Endothelial cell of umbilical vein (primary cell): ENCODE measurements at regions of chr3 and their contacts with region 1.

Region 1: DNA sequence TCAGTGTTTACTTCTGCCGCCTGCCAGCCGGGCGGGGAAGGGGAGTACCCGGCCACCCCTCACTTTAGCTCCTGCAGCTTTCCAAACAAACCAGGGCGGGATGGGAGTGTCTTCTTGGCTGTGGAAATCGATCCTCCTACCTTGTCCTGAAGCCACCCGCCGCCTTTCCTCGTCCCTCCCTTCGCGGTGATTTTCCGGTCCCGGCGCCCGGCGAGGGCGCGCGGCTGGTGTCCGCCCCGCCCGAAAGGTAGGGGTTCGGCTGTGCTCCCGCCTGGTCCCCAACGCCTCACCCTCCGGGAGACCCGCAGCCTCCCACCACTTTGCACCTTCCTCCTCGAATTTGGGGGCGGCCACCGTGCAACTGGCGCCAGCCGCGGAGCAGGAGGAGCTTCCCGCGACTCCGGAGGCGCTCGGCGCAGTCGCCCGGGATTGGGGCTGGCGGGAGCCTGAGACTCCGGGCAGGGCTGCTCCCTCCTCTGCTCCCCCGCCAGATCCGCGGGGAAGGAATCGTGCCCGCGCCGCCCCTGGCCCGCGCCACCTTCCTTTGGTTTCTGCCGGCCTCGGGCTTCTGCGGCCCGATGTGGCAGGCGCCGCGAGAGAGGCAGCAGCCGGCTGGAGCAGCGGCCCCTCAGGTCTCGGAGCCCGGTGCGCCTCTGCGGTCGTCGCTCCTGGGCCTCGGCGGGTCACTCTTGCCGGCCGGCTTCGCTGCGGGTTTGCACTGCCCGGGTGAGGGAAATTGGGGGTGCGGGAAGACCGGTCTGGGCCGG is 30.7 kb upstream of the ST3GAL6 start:
- DNase-seq: peak; percentile 59
- H3K4me3 ChIP-seq: peak overlapping the region; percentile 45 to 96 (median 86)
- H3K27ac ChIP-seq: peak overlapping the region; percentile 92
- H3K4me1 ChIP-seq: peaks cover 45% of the 10 kb centered on the region
- H3K27me3 ChIP-seq: no peaks in the 10 kb centered on the region
- CTCF ChIP-seq: no peak
- POLR2A ChIP-seq: peak; percentile 55

Region 2: GRCh38 chr3:98695796-98696195 is 36.7 kb before region 1 on chr3:
- CTCF ChIA-PET with region 1: no interaction called
- POLR2A ChIA-PET with region 1: interaction called, 3 read pairs
- dilution Hi-C with region 1: no loop called
- intact Hi-C with region 1: loop called (anchors 5 kb)
- DNase-seq: peak; percentile 84
- H3K4me3 ChIP-seq: no peak overlapping the region
- H3K27ac ChIP-seq: peak overlapping the region; percentile 65
- H3K4me1 ChIP-seq: peaks cover 48% of the 10 kb centered on the region
- H3K27me3 ChIP-seq: peaks cover 0 to 7% of the 10 kb centered on the region in 2 experiments
- CTCF ChIP-seq: no peak
- POLR2A ChIP-seq: no peak

Region 3: DNA sequence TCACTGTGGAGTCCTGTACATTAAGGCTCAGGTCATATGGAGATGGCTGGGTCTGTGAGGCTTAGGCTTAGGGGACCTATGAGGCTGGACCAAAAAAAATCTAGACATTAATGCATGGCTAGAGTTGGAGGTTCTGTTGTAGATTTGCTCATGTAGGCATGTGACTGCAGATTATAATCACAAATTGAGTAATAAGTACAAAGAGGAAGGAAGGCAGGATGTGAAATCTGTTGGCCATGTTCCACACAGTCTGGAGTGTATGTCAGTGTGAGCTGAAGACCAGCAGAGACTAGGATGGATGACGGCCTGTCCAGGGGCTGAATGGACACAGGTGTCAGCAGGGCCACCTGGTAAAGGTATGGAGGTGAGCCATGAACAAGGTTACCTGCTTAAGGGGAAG is 30.6 kb after region 1 on chr3 and contains the start of gene ST3GAL6:
- CTCF ChIA-PET with region 1: interaction called, 4 read pairs
- POLR2A ChIA-PET with region 1: no interaction called
- dilution Hi-C with region 1: no loop called
- intact Hi-C with region 1: loop called (anchors 2 kb)
- DNase-seq: peak; percentile 85
- H3K4me3 ChIP-seq: peak within 1 kb of the TSS in 1 of 3 experiments; percentile 9
- H3K27ac ChIP-seq: peak within 1 kb of the TSS; percentile 66
- H3K4me1 ChIP-seq: peaks cover 66% of the 10 kb centered on the region
- H3K27me3 ChIP-seq: no peaks in the 10 kb centered on the region
- CTCF ChIP-seq: no peak
- POLR2A ChIP-seq: no peak
- total RNA-seq, gene ST3GAL6: 17.7 and 35.9 TPM in 2 replicates

Region 4: DNA sequence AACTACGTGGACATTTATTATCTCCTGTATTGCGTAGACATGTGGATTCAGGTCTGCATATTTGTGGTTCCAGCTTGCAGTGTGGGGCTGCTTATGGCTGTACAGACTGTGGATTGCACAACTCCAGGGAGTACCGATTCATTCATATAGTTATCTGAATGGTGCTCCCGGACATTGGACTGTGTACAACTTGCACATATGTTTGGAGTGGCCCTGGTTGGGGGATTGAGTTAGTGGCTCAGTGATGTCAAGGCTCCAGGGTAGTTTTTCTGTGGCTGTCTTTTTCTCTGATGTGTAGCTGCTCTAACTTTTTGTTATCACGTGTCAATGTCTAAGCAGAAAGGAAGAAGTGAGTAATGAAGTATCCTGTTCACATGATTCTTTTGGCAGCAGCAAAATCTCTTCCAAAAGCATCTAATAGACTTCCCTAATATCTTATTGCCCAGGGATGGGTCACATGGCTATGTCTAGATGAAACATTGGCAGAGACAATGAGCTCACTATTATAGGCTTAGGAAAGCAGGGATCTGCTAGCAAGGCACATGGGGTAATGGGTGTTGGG is 46.5 kb after region 1 on chr3:
- CTCF ChIA-PET with region 1: interaction called, 29 read pairs
- POLR2A ChIA-PET with region 1: interaction called, 3 read pairs
- dilution Hi-C with region 1: no loop called
- intact Hi-C with region 1: loop called (anchors 1 kb)
- DNase-seq: peak; percentile 97
- H3K4me3 ChIP-seq: peak overlapping the region in 1 of 3 experiments; percentile 9
- H3K27ac ChIP-seq: peak overlapping the region; percentile 98
- H3K4me1 ChIP-seq: peaks cover 42% of the 10 kb centered on the region
- H3K27me3 ChIP-seq: no peaks in the 10 kb centered on the region
- CTCF ChIP-seq: no peak
- POLR2A ChIP-seq: no peak

Region 5: GRCh38 chr3:98791341-98792325 is 59.2 kb after region 1 on chr3:
- CTCF ChIA-PET with region 1: interaction called, 11 read pairs
- POLR2A ChIA-PET with region 1: no interaction called
- dilution Hi-C with region 1: no loop called
- intact Hi-C with region 1: no loop called
- DNase-seq: peak; percentile 82
- H3K4me3 ChIP-seq: no peak overlapping the region
- H3K27ac ChIP-seq: peak overlapping the region; percentile 2
- H3K4me1 ChIP-seq: peaks cover 20% of the 10 kb centered on the region
- H3K27me3 ChIP-seq: no peaks in the 10 kb centered on the region
- CTCF ChIP-seq: no peak
- POLR2A ChIP-seq: no peak

Region 6: DNA sequence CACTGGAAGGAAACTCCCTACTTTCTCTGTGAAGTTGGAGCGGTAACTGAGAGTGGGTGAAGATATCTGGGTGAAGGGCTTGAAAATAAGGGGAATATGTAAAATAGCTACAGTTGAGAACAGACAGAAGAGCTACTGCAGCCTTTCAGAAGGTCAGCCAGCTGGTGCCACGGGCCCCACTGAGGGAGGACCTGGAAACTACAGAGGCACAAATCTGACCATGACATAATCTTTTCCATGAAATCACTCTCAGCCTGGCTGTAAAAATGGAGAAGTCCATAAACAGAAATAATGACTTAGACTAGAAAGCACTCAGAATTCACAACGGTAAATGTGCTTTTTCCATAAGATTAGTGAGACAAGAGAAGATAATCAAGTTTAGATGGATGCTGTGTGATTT is 77.1 kb after region 1 on chr3:
- CTCF ChIA-PET with region 1: interaction called, 4 read pairs
- POLR2A ChIA-PET with region 1: no interaction called
- dilution Hi-C with region 1: no loop called
- intact Hi-C with region 1: loop called (anchors 2 kb)
- DNase-seq: peak; percentile 68
- H3K4me3 ChIP-seq: no peak overlapping the region
- H3K27ac ChIP-seq: no peak overlapping the region
- H3K4me1 ChIP-seq: peaks cover 3% of the 10 kb centered on the region
- H3K27me3 ChIP-seq: no peaks in the 10 kb centered on the region
- CTCF ChIP-seq: no peak
- POLR2A ChIP-seq: no peak

Region 7: GRCh38 chr3:98901392-98902350 is 169.2 kb after region 1 on chr3 and contains the start of gene DCBLD2:
- CTCF ChIA-PET with region 1: no interaction called
- POLR2A ChIA-PET with region 1: no interaction called
- dilution Hi-C with region 1: no loop called
- intact Hi-C with region 1: no loop called
- DNase-seq: peak; percentile 99
- H3K4me3 ChIP-seq: peak within 1 kb of the TSS; percentile 77 to 93 (median 92)
- H3K27ac ChIP-seq: peak within 1 kb of the TSS; percentile 88
- H3K4me1 ChIP-seq: peaks cover 41% of the 10 kb centered on the region
- H3K27me3 ChIP-seq: no peaks in the 10 kb centered on the region
- CTCF ChIP-seq: no peak
- POLR2A ChIP-seq: peak; percentile 97
- total RNA-seq, gene DCBLD2: 62.6 and 77.3 TPM in 2 replicates

Region 8: DNA sequence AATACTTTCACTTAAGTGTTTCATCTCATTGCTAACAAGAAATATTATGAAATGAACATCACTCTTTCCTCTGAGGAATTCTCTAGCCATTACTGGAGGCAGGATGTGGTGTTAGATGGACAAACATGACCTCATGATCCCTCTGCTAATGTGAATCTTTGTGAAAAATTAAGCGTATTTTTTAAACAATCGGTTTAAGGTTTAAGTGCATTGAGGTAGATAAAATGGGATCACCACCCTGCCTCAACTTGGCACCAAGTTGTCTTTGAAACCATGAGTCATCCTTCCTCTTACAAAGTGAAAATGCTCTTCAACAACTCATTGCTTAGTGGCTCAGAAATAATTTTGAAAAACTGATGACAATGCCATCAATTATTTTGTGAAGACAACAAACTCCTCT is 245.1 kb after region 1 on chr3:
- CTCF ChIA-PET with region 1: no interaction called
- POLR2A ChIA-PET with region 1: no interaction called
- dilution Hi-C with region 1: no loop called
- intact Hi-C with region 1: loop called (anchors 5 kb)
- DNase-seq: peak; percentile 96
- H3K4me3 ChIP-seq: peak overlapping the region in 1 of 3 experiments; percentile 18
- H3K27ac ChIP-seq: peak overlapping the region; percentile 90
- H3K4me1 ChIP-seq: peaks cover 58% of the 10 kb centered on the region
- H3K27me3 ChIP-seq: no peaks in the 10 kb centered on the region
- CTCF ChIP-seq: no peak
- POLR2A ChIP-seq: no peak

Region 9: GRCh38 chr3:99128725-99129505 is 396.4 kb after region 1 on chr3:
- CTCF ChIA-PET with region 1: no interaction called
- POLR2A ChIA-PET with region 1: no interaction called
- dilution Hi-C with region 1: no loop called
- intact Hi-C with region 1: no loop called
- DNase-seq: peak; percentile 91
- H3K4me3 ChIP-seq: no peak overlapping the region
- H3K27ac ChIP-seq: peak overlapping the region; percentile 76
- H3K4me1 ChIP-seq: peaks cover 23% of the 10 kb centered on the region
- H3K27me3 ChIP-seq: no peaks in the 10 kb centered on the region
- CTCF ChIP-seq: no peak
- POLR2A ChIP-seq: no peak